Calu3 (cell line): ENCODE measurements at regions of chr18 and their contacts with region 1.

Region 1: DNA sequence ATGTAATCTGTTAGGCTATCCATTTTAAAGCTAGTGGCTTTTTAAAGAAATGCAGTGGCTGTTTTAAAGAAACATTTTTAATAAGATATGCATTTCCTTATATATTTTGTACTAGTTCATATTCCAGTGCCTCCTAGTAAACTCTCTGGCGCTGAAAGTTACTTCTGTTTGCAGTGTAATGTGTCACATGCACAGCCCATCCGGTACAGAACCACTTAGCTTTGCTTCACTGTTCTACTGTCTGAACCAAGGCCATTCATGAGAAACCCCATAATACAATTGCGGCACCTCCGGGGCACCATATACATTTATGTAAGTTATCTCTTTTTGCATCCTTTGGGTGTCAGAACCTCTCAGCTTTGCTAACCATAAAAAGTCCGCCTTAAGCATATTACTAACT is 114.6 kb upstream of the KCTD1 start:
- DNase-seq: no peak
- H3K4me3 Mint-ChIP-seq: no peak overlapping the region
- H3K27ac Mint-ChIP-seq: no peak overlapping the region
- H3K4me1 Mint-ChIP-seq: peaks cover 10% of the 10 kb centered on the region
- H3K27me3 Mint-ChIP-seq: peaks cover 53% of the 10 kb centered on the region
- CTCF ChIP-seq: no peak

Region 2: GRCh38 chr18:26685438-26686157 is 22.6 kb after region 1 on chr18:
- CTCF ChIA-PET with region 1: no interaction called
- intact Hi-C with region 1: loop called (anchors 1 kb)
- DNase-seq: no peak
- H3K4me3 Mint-ChIP-seq: no peak overlapping the region
- H3K27ac Mint-ChIP-seq: no peak overlapping the region
- H3K4me1 Mint-ChIP-seq: no peaks in the 10 kb centered on the region
- H3K27me3 Mint-ChIP-seq: peaks cover 14% of the 10 kb centered on the region
- CTCF ChIP-seq: no peak